Activated CD4-positive, alpha-beta T cell treated with anti-CD3 and anti-CD28 coated beads for 36 hours (primary cell): ENCODE measurements at regions of chr5 and their contacts with region 1.

Region 1: GRCh38 chr5:132293066-132293991 is 865 bp upstream of the SLC22A4 start:
- DNase-seq: peak; percentile 89
- ATAC-seq: peak; percentile 45
- H3K4me3 Mint-ChIP-seq: peak overlapping the region; percentile 88
- H3K27ac Mint-ChIP-seq: peak overlapping the region; percentile 94
- H3K4me1 Mint-ChIP-seq: peaks cover 22% of the 10 kb centered on the region
- H3K27me3 Mint-ChIP-seq: peaks cover 10% of the 10 kb centered on the region

Region 2: GRCh38 chr5:131396015-131396414 is 897.3 kb before region 1 on chr5:
- CTCF ChIA-PET with region 1: no interaction called
- POLR2A ChIA-PET with region 1: no interaction called
- intact Hi-C with region 1: no loop called
- DNase-seq: peak; percentile 52
- ATAC-seq: peak; percentile 79
- H3K4me3 Mint-ChIP-seq: peak overlapping the region; percentile 49
- H3K27ac Mint-ChIP-seq: peak overlapping the region; percentile 90
- H3K4me1 Mint-ChIP-seq: peaks cover 75% of the 10 kb centered on the region
- H3K27me3 Mint-ChIP-seq: no peaks in the 10 kb centered on the region

Region 3: GRCh38 chr5:132272311-132273210 is 20.8 kb before region 1 on chr5:
- CTCF ChIA-PET with region 1: interaction called, 19 read pairs
- POLR2A ChIA-PET with region 1: no interaction called
- intact Hi-C with region 1: no loop called
- DNase-seq: peak; percentile 85
- ATAC-seq: peak; percentile 42
- H3K4me3 Mint-ChIP-seq: no peak overlapping the region
- H3K27ac Mint-ChIP-seq: no peak overlapping the region
- H3K4me1 Mint-ChIP-seq: peaks cover 2% of the 10 kb centered on the region
- H3K27me3 Mint-ChIP-seq: peaks cover 18% of the 10 kb centered on the region

Region 4: DNA sequence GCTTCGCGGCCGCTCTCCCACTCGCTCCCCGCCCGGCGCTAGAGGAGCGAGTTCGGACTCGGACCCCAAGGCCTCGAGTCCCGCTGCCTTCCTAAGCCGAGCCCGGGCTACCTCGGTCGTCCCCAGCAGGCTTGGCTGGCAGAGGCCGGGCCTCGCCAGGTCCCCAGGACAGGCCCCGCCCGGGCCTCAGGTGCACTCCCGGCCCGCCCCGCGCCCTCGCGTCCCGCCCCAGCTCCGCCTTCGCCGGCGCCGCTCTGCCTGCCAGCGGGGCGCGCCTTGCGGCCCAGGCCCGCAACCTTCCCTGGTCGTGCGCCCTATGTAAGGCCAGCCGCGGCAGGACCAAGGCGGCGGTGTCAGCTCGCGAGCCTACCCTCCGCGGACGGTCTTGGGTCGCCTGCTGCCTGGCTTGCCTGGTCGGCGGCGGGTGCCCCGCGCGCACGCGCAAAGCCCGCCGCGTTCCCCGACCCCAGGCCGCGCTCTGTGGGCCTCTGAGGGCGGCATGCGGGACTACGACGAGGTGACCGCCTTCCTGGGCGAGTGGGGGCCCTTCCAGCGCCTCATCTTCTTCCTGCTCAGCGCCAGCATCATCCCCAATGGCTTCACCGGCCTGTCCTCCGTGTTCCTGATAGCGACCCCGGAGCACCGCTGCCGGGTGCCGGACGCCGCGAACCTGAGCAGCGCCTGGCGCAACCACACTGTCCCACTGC is 76.3 kb after region 1 on chr5 and contains the start of gene SLC22A5:
- CTCF ChIA-PET with region 1: interaction called, 6 read pairs
- POLR2A ChIA-PET with region 1: interaction called, 5 read pairs
- intact Hi-C with region 1: loop called in 1 of 2 experiments (anchors 1 kb)
- DNase-seq: peak; percentile 84
- ATAC-seq: peak; percentile 97
- H3K4me3 Mint-ChIP-seq: peak within 1 kb of the TSS; percentile 66
- H3K27ac Mint-ChIP-seq: peak within 1 kb of the TSS; percentile 80
- H3K4me1 Mint-ChIP-seq: peaks cover 24% of the 10 kb centered on the region
- H3K27me3 Mint-ChIP-seq: no peaks in the 10 kb centered on the region
- total RNA-seq, gene SLC22A5: 3.7 to 4.9 TPM